ENCODE measurements at regions of chr11 and their contacts with region 1.

Region 1: DNA sequence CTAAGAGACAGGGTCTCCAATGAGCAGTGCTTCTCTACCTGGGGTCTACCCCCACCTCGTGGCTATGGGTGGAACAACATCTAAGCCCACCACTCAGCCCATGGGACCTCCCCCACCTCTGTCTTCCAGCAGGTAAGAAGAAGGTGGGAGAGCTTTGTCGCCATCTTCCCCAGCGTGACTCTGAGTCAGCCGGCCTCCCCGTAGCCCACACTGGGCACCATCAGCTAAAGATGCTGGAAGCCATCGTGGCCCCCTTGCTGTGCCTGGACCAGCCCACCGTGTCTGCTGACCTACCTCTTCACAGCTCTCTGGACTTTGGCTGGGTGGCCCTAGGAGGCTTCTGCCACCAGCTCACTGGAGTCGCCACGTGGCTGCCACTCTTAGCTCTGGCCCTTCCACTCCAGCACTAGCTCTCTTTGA is 954 bp downstream of the C11orf86 start:
- DNase-seq: peak; percentile 67 to 95
- H3K4me3 ChIP-seq: no peak overlapping the region
- H3K27ac ChIP-seq: no peak overlapping the region
- H3K4me1 ChIP-seq: peaks cover 0 to 3% (median 0%) of the 10 kb centered on the region in 4 experiments; a peak in 1 of 7 replicates
- H3K27me3 ChIP-seq: no peaks in the 10 kb centered on the region
- CTCF ChIP-seq: peak; percentile 78 to 92 (median 85)
- EP300 ChIP-seq: no peak
- POLR2A ChIP-seq: no peak
- RAD21 ChIP-seq: peak; percentile 88 to 93

Region 2: DNA sequence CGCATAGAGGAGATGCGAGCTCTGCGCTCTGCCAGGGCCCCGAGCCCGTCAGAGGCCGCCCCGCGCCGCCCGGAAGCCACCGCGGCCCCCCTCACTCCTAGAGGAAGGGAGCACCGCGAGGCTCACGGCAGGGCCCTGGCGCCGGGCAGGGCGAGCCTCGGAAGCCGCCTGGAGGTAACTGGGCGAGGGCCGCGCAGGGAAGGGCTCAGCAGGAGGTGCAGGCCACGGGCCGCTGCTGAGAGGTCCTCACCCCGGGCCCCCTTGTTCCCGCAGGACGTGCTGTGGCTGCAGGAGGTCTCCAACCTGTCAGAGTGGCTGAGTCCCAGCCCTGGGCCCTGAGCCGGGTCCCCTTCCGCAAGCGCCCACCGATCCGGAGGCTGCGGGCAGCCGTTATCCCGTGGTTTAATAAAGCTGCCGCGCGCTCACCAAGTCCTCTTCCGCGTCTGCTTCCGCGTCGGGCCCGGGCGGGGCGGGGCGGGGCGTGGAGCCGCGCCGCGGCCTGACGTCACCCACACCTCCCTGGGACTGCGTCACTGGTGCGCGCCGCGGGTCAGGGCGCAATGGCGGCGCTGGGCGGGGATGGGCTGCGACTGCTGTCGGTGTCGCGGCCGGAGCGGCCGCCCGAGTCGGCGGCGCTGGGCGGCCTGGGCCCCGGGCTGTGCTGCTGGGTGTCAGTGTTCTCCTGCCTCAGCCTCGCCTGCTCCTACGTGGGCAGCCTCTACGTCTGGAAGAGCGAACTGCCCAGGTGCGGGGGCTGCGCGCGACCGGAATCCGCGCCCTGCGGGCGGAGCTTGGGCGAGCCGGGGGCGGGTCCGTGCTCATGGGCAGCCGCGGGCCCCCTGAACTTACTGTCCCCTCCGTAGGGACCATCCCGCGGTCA is 132.9 kb before region 1 on chr11 and contains the start of gene RCE1:
- CTCF ChIA-PET with region 1: interaction called, 24 read pairs
- POLR2A ChIA-PET with region 1: interaction called, 18 read pairs
- DNase-seq: peak in 1 of 2 experiments; percentile 96
- H3K4me3 ChIP-seq: peak within 1 kb of the TSS; percentile 79 to 92 (median 90)
- H3K27ac ChIP-seq: peak within 1 kb of the TSS; percentile 88
- H3K4me1 ChIP-seq: peaks cover 0 to 11% (median 3%) of the 10 kb centered on the region in 4 experiments; a peak in 4 of 7 replicates
- H3K27me3 ChIP-seq: no peaks in the 10 kb centered on the region
- CTCF ChIP-seq: no peak
- EP300 ChIP-seq: peak in 1 of 2 experiments; percentile 40; a peak in 1 of 3 replicates
- POLR2A ChIP-seq: peak; percentile 77 to 98
- RAD21 ChIP-seq: no peak
- total RNA-seq, gene RCE1: 33.7 and 35.8 TPM in 2 replicates

Region 3: GRCh38 chr11:66883016-66883968 is 92.8 kb before region 1 on chr11:
- CTCF ChIA-PET with region 1: interaction called, 74 read pairs
- POLR2A ChIA-PET with region 1: interaction called, 4 read pairs
- DNase-seq: peak in 1 of 2 experiments; percentile 97
- H3K4me3 ChIP-seq: no peak overlapping the region
- H3K27ac ChIP-seq: no peak overlapping the region
- H3K4me1 ChIP-seq: peaks cover 4 to 25% (median 16%) of the 10 kb centered on the region in 4 experiments
- H3K27me3 ChIP-seq: no peaks in the 10 kb centered on the region
- CTCF ChIP-seq: peak; percentile 83 to 95 (median 95)
- EP300 ChIP-seq: no peak
- POLR2A ChIP-seq: no peak
- RAD21 ChIP-seq: peak; percentile 81 to 83

Region 4: DNA sequence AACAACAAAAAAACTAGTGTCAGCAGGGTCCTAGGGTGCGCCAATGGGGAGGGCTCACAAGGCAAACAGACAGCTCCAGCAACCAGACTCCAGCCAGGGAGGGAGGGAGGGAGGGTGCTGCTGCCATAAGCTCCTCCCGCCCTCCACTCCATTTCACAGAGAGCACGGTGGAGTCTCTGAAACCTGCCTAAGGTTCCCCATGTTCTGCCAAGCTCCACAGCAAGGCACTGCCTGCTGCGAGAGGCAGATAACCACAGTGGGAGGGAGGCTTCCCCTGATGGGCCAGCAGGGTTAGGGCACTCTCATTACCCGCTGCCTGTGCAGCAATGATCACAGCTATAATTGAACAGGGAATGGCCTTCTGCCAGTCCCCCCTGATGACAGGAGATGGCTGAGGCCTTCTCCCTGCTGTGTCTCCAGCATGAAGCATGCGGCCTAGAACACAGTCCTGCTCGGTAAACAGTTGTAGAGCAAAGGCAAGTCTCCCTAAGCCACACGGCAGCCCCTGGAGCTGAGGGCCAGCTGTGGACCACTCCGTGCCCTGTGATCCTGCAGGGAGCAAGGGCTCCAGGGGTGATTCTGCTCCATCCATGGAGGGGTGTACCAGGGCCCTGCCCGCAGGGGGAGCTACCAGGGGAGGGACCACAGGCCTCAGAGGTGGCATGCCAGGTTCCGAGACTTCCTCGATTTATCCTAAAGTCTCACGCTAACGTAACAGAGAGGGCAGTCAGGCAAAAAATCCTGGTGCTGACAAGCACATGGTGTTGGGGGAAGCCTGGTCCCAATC is 60.8 kb before region 1 on chr11:
- CTCF ChIA-PET with region 1: interaction called, 15 read pairs
- POLR2A ChIA-PET with region 1: no interaction called
- DNase-seq: no peak
- H3K4me3 ChIP-seq: no peak overlapping the region
- H3K27ac ChIP-seq: no peak overlapping the region
- H3K4me1 ChIP-seq: peaks cover 5 to 21% (median 12%) of the 10 kb centered on the region in 4 experiments
- H3K27me3 ChIP-seq: no peaks in the 10 kb centered on the region
- CTCF ChIP-seq: peak; percentile 18 to 35 (median 19); a peak in 3 of 4 replicates
- EP300 ChIP-seq: no peak
- POLR2A ChIP-seq: no peak
- RAD21 ChIP-seq: peak in 1 of 2 experiments; percentile 24; a peak in 1 of 4 replicates

Region 5: DNA sequence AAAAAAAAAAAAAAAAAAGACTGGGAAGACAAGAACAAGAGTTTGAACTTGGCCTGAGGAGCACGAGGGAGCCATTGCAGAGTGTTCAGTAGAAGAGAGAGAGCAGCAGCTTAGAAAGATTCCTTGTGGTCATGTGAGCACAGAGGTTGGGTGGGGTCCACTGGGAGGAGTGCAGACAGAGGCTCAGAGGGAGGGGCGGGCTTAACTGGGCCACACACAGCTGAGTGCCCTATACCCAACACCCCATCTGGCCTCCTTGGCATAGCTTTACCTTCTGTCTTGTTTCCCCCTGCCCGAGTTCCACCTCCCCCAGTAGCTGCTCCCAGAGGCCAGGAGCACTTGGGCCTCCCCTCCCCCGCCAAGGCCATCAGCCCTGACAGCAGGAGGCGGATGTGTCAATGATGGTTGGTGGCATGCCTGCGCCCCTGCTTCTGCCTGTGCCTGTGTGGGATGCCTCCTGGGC is 11.1 kb after region 1 on chr11:
- CTCF ChIA-PET with region 1: interaction called, 45 read pairs
- POLR2A ChIA-PET with region 1: interaction called, 14 read pairs
- DNase-seq: peak in 1 of 2 experiments; percentile 73
- H3K4me3 ChIP-seq: no peak overlapping the region
- H3K27ac ChIP-seq: no peak overlapping the region
- H3K4me1 ChIP-seq: peaks cover 0 to 6% (median 5%) of the 10 kb centered on the region in 4 experiments; a peak in 6 of 7 replicates
- H3K27me3 ChIP-seq: no peaks in the 10 kb centered on the region
- CTCF ChIP-seq: no peak
- EP300 ChIP-seq: no peak
- POLR2A ChIP-seq: no peak
- RAD21 ChIP-seq: no peak